ENCODE measurements at regions of chr6 and their contacts with region 1.

Region 1: GRCh38 chr6:169404828-169405227 is 151.2 kb upstream of the THBS2 start:
- DNase-seq: no peak
- ATAC-seq: no peak
- H3K4me3 ChIP-seq: no peak overlapping the region
- H3K27ac ChIP-seq: no peak overlapping the region
- H3K4me1 ChIP-seq: no peaks in the 10 kb centered on the region
- H3K27me3 ChIP-seq: no peaks in the 10 kb centered on the region
- CTCF ChIP-seq: no peak
- POLR2A ChIP-seq: no peak
- RAD21 ChIP-seq: no peak

Region 2: GRCh38 chr6:169190144-169190584 is 214.7 kb before region 1 on chr6:
- CTCF ChIA-PET with region 1: no interaction called
- POLR2A ChIA-PET with region 1: no interaction called
- dilution Hi-C with region 1: no loop called
- in situ Hi-C with region 1: no loop called
- intact Hi-C with region 1: no loop called
- DNase-seq: peak; percentile 89
- ATAC-seq: peak; percentile 91
- H3K4me3 ChIP-seq: no peak overlapping the region
- H3K27ac ChIP-seq: peak overlapping the region; percentile 70; the same call in 1 of the 2 replicates
- H3K4me1 ChIP-seq: peaks cover 21% of the 10 kb centered on the region
- H3K27me3 ChIP-seq: no peaks in the 10 kb centered on the region
- CTCF ChIP-seq: no peak
- POLR2A ChIP-seq: no peak
- RAD21 ChIP-seq: no peak

Region 3: DNA sequence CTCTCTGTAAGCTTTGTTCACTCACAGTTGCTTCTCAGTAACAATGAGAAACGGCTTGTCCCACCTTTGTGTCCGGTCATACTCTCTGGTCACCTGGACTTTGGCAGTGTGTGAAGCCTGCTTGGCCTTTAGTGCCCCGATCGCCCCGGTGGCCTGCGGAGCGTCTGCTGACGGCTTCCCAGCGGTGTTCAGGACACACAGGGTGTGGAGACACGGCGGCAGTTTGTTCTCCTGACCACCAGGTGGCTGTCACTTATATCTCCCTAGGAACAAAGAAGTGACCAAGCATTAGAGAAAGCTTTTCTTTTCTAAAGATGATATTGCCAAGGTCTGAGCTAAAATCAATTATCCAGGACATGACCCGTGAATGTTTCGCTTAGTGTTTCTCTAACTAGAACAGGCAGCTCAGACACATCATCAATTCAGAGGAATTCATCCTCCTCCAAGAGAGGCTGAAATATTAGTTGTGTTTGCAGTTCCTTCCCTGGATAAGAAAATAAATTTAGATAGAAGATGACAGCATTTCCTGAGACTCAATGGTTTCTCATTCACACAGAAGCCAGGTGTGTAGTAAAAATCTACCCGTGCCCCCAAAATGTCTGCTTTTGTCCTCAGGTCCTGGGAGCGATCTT is 16.2 kb after region 1 on chr6:
- CTCF ChIA-PET with region 1: interaction called, 3 read pairs
- POLR2A ChIA-PET with region 1: no interaction called
- dilution Hi-C with region 1: no loop called
- in situ Hi-C with region 1: no loop called
- intact Hi-C with region 1: loop called (anchors 2 kb)
- DNase-seq: peak; percentile 18
- ATAC-seq: peak; percentile 66
- H3K4me3 ChIP-seq: no peak overlapping the region
- H3K27ac ChIP-seq: no peak overlapping the region
- H3K4me1 ChIP-seq: no peaks in the 10 kb centered on the region
- H3K27me3 ChIP-seq: no peaks in the 10 kb centered on the region
- CTCF ChIP-seq: peak; percentile 31; the same call in 1 of the 2 replicates
- POLR2A ChIP-seq: no peak
- RAD21 ChIP-seq: peak; percentile 27